Activated CD4-positive, alpha-beta T cell treated with anti-CD3 and anti-CD28 coated beads, Interleukin-2, amount 10 ng/mL, durations not matched to agents 24 days and 14 days (primary cell): ENCODE measurements at regions of chr2 and their contacts with region 1.

Region 1: GRCh38 chr2:177164584-177165052 is 48.0 kb upstream of the HNRNPA3 start:
- DNase-seq: peak; percentile 94
- H3K4me3 Mint-ChIP-seq: no peak overlapping the region
- H3K27ac Mint-ChIP-seq: no peak overlapping the region
- H3K4me1 Mint-ChIP-seq: peaks cover 27% of the 10 kb centered on the region
- H3K27me3 Mint-ChIP-seq: peaks cover 11% of the 10 kb centered on the region

Region 2: DNA sequence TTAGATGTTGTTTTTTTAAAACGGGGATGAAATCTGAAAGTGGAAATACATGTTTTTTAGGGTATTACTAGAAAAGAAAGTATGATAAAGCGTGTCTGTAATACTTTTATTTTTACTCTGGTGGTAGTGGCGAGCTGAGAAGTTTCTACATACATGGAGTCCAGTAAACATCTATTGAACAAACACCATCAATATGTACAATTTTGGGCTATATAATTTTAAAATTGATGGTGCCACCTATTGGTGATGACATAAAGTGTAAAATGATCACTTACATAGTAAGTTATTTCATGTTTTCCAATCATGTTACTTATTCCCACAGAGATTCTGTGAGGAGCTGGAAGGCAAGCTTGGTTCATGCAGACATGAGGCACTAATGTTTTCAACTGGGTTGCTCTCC is 131.4 kb after region 1 on chr2:
- intact Hi-C with region 1: loop called (anchors 1 kb)
- DNase-seq: no peak
- H3K4me3 Mint-ChIP-seq: no peak overlapping the region
- H3K27ac Mint-ChIP-seq: no peak overlapping the region
- H3K4me1 Mint-ChIP-seq: peaks cover 34% of the 10 kb centered on the region
- H3K27me3 Mint-ChIP-seq: no peaks in the 10 kb centered on the region

Region 3: DNA sequence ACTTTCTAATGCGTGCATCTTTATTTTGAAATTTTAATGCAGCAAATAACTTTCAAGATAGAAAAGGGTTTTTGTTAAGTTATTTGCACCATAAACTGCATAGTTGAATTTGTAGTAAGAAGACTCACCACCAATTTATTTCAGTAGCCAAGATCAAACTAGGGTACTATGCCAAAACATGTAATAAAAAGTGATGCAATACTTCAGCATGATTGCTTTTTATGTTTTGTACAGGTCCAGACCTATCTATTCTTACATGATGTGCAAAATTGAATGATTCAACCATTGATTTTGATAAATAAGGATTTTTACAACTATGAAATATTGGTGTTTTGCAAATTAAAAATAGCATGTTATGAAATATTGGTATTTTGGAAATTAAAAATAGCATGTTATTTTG is 254.7 kb after region 1 on chr2:
- intact Hi-C with region 1: loop called (anchors 1 kb)
- DNase-seq: no peak
- H3K4me3 Mint-ChIP-seq: no peak overlapping the region
- H3K27ac Mint-ChIP-seq: no peak overlapping the region
- H3K4me1 Mint-ChIP-seq: peaks cover 14% of the 10 kb centered on the region
- H3K27me3 Mint-ChIP-seq: no peaks in the 10 kb centered on the region

Region 4: DNA sequence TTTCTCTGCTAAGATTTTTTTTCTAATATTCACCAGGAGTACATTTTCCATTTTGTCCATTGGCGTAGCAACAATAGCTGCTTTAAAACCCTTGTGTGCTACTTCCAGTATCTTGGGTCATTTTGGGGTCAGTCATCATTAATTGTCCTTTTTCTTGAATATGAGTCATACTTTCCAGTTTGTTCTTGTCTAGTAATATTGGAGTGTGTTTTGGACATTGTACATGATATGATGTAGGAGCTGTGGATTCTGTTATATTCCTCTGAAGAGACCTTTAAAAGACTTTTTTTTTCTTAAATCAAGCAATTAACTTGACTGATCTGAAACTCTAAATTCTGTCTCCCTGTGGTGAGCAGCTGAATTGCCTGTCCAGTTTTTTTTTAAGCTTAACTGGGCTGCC is 268.8 kb after region 1 on chr2:
- intact Hi-C with region 1: no loop called
- DNase-seq: no peak
- H3K4me3 Mint-ChIP-seq: no peak overlapping the region
- H3K27ac Mint-ChIP-seq: no peak overlapping the region
- H3K4me1 Mint-ChIP-seq: no peaks in the 10 kb centered on the region
- H3K27me3 Mint-ChIP-seq: no peaks in the 10 kb centered on the region

Region 5: GRCh38 chr2:177618255-177619253 is 453.9 kb after region 1 on chr2:
- intact Hi-C with region 1: loop called (anchors 5 kb)
- DNase-seq: peak; percentile 98
- H3K4me3 Mint-ChIP-seq: peak overlapping the region; percentile 92
- H3K27ac Mint-ChIP-seq: peak overlapping the region; percentile 97
- H3K4me1 Mint-ChIP-seq: peaks cover 8% of the 10 kb centered on the region
- H3K27me3 Mint-ChIP-seq: peaks cover 24% of the 10 kb centered on the region

Region 6: GRCh38 chr2:177724398-177725287 is 560.0 kb after region 1 on chr2:
- intact Hi-C with region 1: loop called (anchors 1 kb)
- DNase-seq: peak; percentile 84
- H3K4me3 Mint-ChIP-seq: no peak overlapping the region
- H3K27ac Mint-ChIP-seq: no peak overlapping the region
- H3K4me1 Mint-ChIP-seq: peaks cover 2% of the 10 kb centered on the region
- H3K27me3 Mint-ChIP-seq: peaks cover 33% of the 10 kb centered on the region

Region 7: DNA sequence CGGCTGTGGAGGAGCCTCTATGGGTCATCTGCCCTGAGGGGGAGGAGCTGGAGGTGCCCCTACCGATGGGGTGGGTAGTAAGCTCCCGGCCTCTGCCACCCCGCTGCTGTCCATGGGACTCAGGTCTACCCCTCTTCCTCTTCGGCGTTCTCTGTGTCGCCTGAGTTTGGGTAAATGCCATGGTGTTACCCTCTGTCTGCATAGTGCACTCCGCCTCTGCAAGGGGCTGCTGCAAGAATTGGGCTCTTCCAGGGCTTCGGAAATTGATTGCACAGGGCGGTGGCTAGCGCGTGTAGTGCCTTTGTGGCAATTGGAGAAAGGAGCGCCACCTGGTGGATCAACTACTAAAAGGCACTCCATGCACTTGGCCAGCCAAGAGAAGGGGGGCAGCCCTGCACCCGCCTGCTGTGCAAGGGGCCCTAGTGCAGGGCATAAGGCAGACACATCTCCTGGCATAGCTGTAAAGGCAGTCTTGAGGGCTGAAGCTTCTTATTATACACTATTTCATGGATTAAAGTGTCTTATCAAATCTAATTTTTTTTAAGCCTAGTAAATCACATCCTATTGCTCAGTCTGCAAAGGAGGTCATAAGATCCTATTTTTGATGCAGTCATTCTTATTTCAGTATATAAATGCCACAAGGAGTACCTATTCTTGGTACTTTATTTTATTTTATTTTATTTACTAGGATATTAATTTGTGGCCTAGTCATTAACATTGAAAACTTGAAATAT is 599.1 kb after region 1 on chr2:
- intact Hi-C with region 1: loop called (anchors 10 kb)
- DNase-seq: peak; percentile 92
- H3K4me3 Mint-ChIP-seq: no peak overlapping the region
- H3K27ac Mint-ChIP-seq: no peak overlapping the region
- H3K4me1 Mint-ChIP-seq: no peaks in the 10 kb centered on the region
- H3K27me3 Mint-ChIP-seq: peaks cover 25% of the 10 kb centered on the region